ENCODE measurements at regions of chr5 and their contacts with region 1.

Region 1: GRCh38 chr5:113194125-113194524 is 217.5 kb downstream of the DCP2 start:
- DNase-seq: no peak
- H3K4me3 ChIP-seq: no peak overlapping the region
- H3K27ac ChIP-seq: no peak overlapping the region
- H3K4me1 ChIP-seq: peaks cover 0 to 2% (median 0%) of the 10 kb centered on the region in 4 experiments; a peak in 1 of 7 replicates
- H3K27me3 ChIP-seq: no peaks in the 10 kb centered on the region
- CTCF ChIP-seq: no peak
- EP300 ChIP-seq: no peak
- POLR2A ChIP-seq: no peak
- RAD21 ChIP-seq: no peak

Region 2: GRCh38 chr5:113181853-113182490 is 12.2 kb before region 1 on chr5:
- CTCF ChIA-PET with region 1: interaction called, 12 read pairs
- POLR2A ChIA-PET with region 1: interaction called, 3 read pairs
- DNase-seq: no peak
- H3K4me3 ChIP-seq: no peak overlapping the region
- H3K27ac ChIP-seq: no peak overlapping the region
- H3K4me1 ChIP-seq: peaks cover 3 to 12% (median 4%) of the 10 kb centered on the region in 4 experiments; a peak in 5 of 7 replicates
- H3K27me3 ChIP-seq: no peaks in the 10 kb centered on the region
- CTCF ChIP-seq: no peak
- EP300 ChIP-seq: no peak
- POLR2A ChIP-seq: no peak
- RAD21 ChIP-seq: no peak